Activated CD4-positive, alpha-beta T cell treated with anti-CD3 and anti-CD28 coated beads, Interleukin-2, amount 10 ng/mL, durations not matched to agents 24 days and 14 days (primary cell): ENCODE measurements at regions of chr19 and their contacts with region 1.

Region 1: GRCh38 chr19:39532233-39533002 is at the start of gene EID2B:
- DNase-seq: peak; percentile 98
- H3K4me3 Mint-ChIP-seq: peak within 1 kb of the TSS; percentile 93
- H3K27ac Mint-ChIP-seq: peak within 1 kb of the TSS; percentile 90
- H3K4me1 Mint-ChIP-seq: peaks cover 19% of the 10 kb centered on the region
- H3K27me3 Mint-ChIP-seq: no peaks in the 10 kb centered on the region
- total RNA-seq, gene EID2B: 3.4 and 3.6 TPM in 2 replicates

Region 2: GRCh38 chr19:39124136-39124764 is 408.2 kb before region 1 on chr19:
- intact Hi-C with region 1: loop called (anchors 5 kb)
- DNase-seq: no peak
- H3K4me3 Mint-ChIP-seq: peak overlapping the region; percentile 68
- H3K27ac Mint-ChIP-seq: peak overlapping the region; percentile 76
- H3K4me1 Mint-ChIP-seq: peaks cover 27% of the 10 kb centered on the region
- H3K27me3 Mint-ChIP-seq: peaks cover 7% of the 10 kb centered on the region

Region 3: DNA sequence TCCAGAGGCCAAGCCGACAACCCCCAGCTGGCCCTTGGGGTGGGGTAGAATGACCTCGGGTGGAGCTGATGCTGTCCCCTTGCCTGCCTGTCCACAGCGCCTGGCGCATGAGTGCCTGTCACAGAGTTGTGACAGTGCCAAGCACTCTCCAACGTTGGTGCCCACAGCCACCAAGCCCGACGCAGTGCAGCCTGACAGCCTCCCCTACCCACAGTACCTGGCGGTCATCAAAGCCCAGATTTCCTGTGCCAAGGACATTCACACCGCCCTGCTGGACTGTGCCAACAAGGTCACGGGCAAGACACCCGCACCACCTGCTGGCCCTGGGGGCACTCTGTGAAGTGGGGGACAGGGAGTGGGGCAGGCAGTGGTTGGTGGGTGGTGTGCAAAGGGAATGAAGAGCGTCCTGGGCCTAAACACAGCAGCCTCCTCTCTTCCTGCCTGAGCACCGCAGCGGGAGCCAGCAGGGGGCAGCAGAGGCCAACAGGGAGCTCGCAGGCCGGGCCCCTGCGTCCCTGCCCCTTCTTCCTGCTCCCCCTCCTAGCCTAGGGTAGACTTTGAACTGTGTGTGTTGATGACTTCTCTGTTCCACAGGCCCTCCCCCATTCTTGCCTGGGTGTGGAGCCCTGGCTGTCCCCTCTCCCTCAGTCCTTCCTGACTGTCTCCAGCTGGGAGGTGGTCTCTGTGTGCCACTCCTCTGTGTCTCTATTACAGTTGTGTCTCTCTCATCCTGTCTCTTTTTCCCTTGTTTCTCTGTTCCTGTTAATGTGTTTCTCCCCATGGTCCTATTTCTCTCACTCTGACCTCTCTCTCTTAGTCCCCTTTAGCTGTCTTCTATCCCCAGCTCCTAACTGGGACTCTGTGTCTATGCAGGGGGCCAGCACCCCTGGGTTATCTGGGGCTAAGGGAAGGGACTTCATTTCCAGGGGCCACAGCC is 134.8 kb before region 1 on chr19:
- intact Hi-C with region 1: loop called (anchors 1 kb)
- DNase-seq: peak; percentile 98
- H3K4me3 Mint-ChIP-seq: peak overlapping the region; percentile 60
- H3K27ac Mint-ChIP-seq: peak overlapping the region; percentile 90
- H3K4me1 Mint-ChIP-seq: peaks cover 51% of the 10 kb centered on the region
- H3K27me3 Mint-ChIP-seq: no peaks in the 10 kb centered on the region

Region 4: GRCh38 chr19:39474139-39474622 is 58.2 kb before region 1 on chr19:
- intact Hi-C with region 1: loop called (anchors 1 kb)
- DNase-seq: peak; percentile 92
- H3K4me3 Mint-ChIP-seq: no peak overlapping the region
- H3K27ac Mint-ChIP-seq: no peak overlapping the region
- H3K4me1 Mint-ChIP-seq: peaks cover 17% of the 10 kb centered on the region
- H3K27me3 Mint-ChIP-seq: no peaks in the 10 kb centered on the region

Region 5: DNA sequence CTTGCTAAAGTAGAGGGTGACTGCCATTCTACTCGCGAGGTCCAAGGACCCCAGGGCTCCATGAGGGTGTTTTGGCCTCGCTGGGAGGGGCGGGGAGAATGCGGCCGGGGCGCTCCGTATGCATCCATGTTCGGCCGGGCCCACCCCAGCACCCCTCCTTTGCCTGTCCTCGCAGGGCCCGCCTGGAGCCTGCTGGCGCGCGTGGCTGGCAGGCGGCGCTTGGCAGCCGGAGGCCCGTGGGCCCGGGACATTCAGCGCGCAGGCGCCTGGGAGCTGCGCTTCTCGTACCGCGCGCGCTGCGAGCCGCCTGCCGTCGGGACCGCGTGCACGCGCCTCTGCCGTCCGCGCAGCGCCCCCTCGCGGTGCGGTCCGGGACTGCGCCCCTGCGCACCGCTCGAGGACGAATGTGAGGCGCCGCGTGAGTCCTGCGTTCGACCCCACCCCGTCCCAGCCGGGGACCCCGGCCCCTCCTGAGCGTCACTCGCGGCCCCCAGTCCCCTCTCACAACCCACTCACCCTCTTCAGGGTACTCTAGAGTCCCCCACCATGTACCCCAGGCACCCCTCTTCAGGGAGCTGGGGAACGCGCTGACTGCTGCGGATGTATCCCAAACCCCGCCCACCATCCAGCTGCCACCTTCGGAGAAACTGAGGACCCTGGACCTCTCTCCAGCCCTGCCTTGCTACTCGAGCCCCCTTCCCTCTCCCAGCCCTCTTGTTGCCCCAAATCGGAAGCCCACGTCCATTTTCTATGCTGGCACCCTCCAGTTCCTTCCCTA is 29.6 kb before region 1 on chr19:
- intact Hi-C with region 1: loop called (anchors 2 kb)
- DNase-seq: peak; percentile 95
- H3K4me3 Mint-ChIP-seq: peak overlapping the region; percentile 42
- H3K27ac Mint-ChIP-seq: no peak overlapping the region
- H3K4me1 Mint-ChIP-seq: peaks cover 29% of the 10 kb centered on the region
- H3K27me3 Mint-ChIP-seq: peaks cover 63% of the 10 kb centered on the region

Region 6: GRCh38 chr19:39582891-39583625 is 50.6 kb after region 1 on chr19:
- intact Hi-C with region 1: no loop called
- DNase-seq: no peak
- H3K4me3 Mint-ChIP-seq: no peak overlapping the region
- H3K27ac Mint-ChIP-seq: no peak overlapping the region
- H3K4me1 Mint-ChIP-seq: peaks cover 10% of the 10 kb centered on the region
- H3K27me3 Mint-ChIP-seq: no peaks in the 10 kb centered on the region